IMR-90 (cell line): ENCODE measurements at regions of chrX and their contacts with region 1.

Region 1: DNA sequence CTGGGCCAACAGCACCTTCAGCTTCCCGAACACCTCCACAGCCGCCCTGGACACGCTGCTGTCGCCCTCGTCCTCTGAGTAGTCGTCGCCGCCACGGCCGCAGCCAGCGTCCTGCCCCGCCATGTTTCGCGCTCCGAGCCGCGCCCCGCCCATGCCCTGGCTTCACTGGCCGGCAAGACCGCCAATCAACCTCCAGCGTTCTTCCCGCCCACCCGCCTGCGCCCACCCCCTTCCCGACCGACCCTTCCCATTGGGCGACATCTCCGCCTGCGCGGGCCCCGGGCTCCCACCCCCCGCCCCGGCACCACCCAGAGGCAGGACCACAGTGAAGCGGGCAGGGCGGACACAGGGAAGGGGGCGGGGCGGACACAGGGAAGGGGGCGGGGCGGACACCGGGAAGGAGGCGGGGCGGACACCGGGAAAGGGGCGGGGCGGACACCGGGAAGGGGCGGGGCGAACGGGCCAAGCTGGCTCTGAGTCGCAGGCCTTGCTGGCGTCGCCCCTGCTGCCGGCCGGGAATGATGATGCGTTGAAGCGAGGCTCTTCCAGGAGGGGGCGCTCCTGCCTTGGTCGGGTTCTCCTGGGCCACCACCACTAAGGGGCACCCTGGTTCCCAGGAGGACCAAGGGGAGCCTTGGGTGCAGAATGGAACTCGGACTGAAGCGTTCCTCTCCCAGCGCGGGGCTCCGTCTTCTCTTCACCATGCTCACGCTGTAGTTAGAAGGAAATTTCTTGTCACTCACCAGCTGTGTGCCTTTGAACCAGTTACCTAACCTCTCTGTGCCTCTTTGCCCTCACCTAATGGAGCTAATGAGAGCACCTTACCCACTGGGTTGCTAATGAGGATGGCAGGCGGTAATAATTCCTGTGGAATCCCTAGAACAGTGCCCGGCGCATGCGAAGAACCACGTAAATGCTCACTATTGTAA is at the start of gene HAUS7:
- DNase-seq: peak; percentile 84
- ATAC-seq: peak; percentile 91
- H3K4me3 ChIP-seq: peak within 1 kb of the TSS; percentile 75
- H3K27ac ChIP-seq: peak within 1 kb of the TSS; percentile 29
- H3K4me1 ChIP-seq: peaks cover 17% of the 10 kb centered on the region
- H3K27me3 ChIP-seq: no peaks in the 10 kb centered on the region
- CTCF ChIP-seq: peak; percentile 98
- POLR2A ChIP-seq: no peak
- RAD21 ChIP-seq: peak; percentile 86
- total RNA-seq, gene HAUS7: 10.8 TPM in 2 replicates

Region 2: GRCh38 chrX:153494541-153495361 is 24.1 kb after region 1 on chrX and contains the start of gene BGN:
- CTCF ChIA-PET with region 1: interaction called, 10 read pairs
- POLR2A ChIA-PET with region 1: interaction called, 3 read pairs
- dilution Hi-C with region 1: no loop called
- in situ Hi-C with region 1: no loop called
- intact Hi-C with region 1: loop called (anchors 1 kb)
- DNase-seq: peak; percentile 44
- ATAC-seq: peak; percentile 67
- H3K4me3 ChIP-seq: peak within 1 kb of the TSS; percentile 70
- H3K27ac ChIP-seq: peak within 1 kb of the TSS; percentile 90
- H3K4me1 ChIP-seq: peaks cover 20% of the 10 kb centered on the region
- H3K27me3 ChIP-seq: no peaks in the 10 kb centered on the region
- CTCF ChIP-seq: peak; percentile 50
- POLR2A ChIP-seq: 0 out of 2 replicates have a peak, but pooled peaks have one; percentile 47
- RAD21 ChIP-seq: peak; percentile 63
- total RNA-seq, gene BGN: 10.0 and 11.3 TPM in 2 replicates

Region 3: DNA sequence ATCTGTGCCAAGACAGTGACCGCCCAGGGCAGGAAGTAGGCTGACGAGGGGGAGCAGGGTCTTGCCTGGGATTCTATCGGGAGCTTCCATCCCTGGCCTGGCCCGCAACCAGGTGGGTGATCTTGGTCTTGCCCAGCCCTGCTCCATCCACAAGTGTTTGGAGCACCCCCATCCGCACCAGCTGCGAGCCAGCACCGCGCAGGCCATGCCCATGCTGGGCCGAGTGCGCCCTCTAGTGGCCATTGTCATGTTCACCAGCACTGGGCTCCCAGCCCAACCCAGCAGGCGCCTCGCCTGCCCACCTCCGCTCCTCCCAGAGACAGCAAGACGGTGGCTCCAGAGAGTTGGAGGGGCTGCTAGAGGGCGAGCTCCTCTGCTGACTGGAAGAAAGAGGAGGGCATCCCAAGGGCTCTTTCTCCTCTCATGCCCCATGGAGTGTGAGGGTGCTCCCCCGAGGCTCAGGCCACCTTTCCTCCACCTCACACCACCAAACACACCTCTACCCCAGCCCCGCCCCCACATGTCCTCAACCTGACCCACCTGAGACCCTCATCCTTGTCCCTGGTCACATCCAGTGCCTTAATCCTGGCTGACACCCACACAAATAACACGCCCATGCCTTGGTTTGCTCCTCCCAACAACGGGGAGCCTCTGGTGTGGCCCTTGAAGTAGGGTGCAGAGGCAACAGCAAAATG is 36.9 kb after region 1 on chrX:
- CTCF ChIA-PET with region 1: interaction called, 10 read pairs
- POLR2A ChIA-PET with region 1: interaction called, 3 read pairs
- dilution Hi-C with region 1: no loop called
- in situ Hi-C with region 1: no loop called
- intact Hi-C with region 1: loop called (anchors 1 kb)
- DNase-seq: peak; percentile 58
- ATAC-seq: peak; percentile 89
- H3K4me3 ChIP-seq: no peak overlapping the region
- H3K27ac ChIP-seq: no peak overlapping the region
- H3K4me1 ChIP-seq: no peaks in the 10 kb centered on the region
- H3K27me3 ChIP-seq: no peaks in the 10 kb centered on the region
- CTCF ChIP-seq: peak; percentile 87
- POLR2A ChIP-seq: no peak
- RAD21 ChIP-seq: peak; percentile 89

Region 4: GRCh38 chrX:153599192-153600031 is 128.7 kb after region 1 on chrX:
- CTCF ChIA-PET with region 1: no interaction called
- POLR2A ChIA-PET with region 1: no interaction called
- dilution Hi-C with region 1: no loop called
- in situ Hi-C with region 1: no loop called
- intact Hi-C with region 1: no loop called
- DNase-seq: peak; percentile 81
- ATAC-seq: peak; percentile 90
- H3K4me3 ChIP-seq: peak overlapping the region; percentile 94
- H3K27ac ChIP-seq: peak overlapping the region; percentile 80; the same call in 1 of the 2 replicates
- H3K4me1 ChIP-seq: 0 out of 2 replicates have a peak, but pooled peaks cover 3% of the 10 kb centered on the region
- H3K27me3 ChIP-seq: no peaks in the 10 kb centered on the region; the same call in 1 of the 2 replicates
- CTCF ChIP-seq: no peak
- POLR2A ChIP-seq: no peak
- RAD21 ChIP-seq: no peak